Posterior vena cava (tissue), 2 donors: ENCODE measurements at regions of chr15 and their contacts with region 1.

Region 1: DNA sequence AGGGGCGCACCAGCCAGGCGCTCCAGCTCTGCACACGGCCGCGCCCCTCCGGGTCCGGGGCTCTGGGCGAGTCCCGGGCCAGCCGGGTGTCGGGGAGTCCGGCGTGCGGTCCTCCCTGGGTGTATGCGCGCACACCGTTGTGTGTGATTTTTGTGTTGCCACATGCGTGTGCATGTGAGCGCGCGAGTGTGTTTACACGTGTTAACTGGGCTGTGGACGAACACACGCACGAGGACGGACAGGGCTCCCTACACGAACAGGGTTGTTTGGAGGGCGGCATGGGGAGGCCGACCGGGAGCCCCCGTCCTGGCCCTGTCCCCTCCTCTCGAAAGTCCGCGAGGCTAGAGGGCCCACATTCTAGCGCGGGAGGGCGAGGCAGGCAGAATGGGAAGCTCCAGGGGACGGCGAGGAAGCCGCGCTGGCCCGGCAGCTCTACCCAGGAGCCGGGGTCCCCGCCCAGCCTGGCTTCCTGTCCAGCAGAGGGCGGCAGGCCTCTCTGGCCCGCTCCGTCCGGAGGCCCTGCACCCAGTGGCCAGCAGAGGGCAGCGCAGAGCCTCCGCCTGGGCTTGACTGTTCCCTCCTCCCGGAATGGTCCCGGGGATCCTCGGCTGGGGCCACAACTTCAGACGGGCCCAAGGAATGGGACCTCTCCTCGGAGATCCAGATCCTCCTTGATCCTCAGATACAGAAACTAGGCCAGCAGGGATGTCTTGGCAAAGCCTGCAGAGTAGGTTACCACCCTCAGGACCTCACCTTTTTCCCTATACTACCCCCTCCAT is 611 bp upstream of the LINGO1 start:
- DNase-seq: peak; percentile 96

Region 2: GRCh38 chr15:77550292-77551251 is 82.8 kb before region 1 on chr15:
- intact Hi-C with region 1: no loop called
- DNase-seq: no peak

Region 3: GRCh38 chr15:77695961-77696582 is 62.7 kb after region 1 on chr15:
- intact Hi-C with region 1: loop called in 1 of 2 experiments (anchors 10 kb)
- DNase-seq: no peak